ENCODE measurements at regions of chr2 and their contacts with region 1.

Region 1: DNA sequence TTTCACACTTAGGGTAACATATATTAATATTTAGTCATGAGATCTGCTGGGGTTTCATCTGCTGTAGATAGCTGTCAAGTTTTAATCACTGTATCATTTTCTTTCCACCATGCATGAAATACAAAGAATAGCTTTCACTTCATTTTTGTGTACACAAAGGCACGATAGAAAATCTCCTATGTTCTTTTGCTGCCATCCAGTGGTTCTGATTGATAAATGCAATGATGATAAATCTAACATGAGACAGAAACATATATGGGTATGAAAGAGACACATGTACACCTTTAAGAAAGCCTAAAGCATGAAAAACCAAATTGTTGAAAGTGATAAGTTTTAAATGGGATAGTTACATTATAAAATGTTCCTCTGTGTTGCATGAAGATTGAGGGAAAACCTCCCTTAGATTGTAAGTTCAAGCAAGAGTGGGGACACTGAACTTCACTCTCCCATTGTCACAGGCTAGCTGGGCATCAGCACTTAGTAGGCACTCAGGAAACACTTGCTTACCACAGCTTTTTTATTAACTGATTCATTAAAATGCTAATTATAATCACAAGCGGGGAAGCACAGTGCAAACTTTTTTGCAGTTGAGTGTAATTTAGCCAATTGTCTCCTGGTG is 31.2 kb downstream of the C1D start:
- DNase-seq: peak; percentile 70
- ATAC-seq: peak; percentile 89
- H3K4me3 ChIP-seq: no peak overlapping the region
- H3K27ac ChIP-seq: no peak overlapping the region
- H3K4me1 ChIP-seq: no peaks in the 10 kb centered on the region; the same call in 1 of the 2 replicates
- H3K27me3 ChIP-seq: no peaks in the 10 kb centered on the region
- CTCF ChIP-seq: peak; percentile 79
- POLR2A ChIP-seq: no peak
- RAD21 ChIP-seq: peak; percentile 89

Region 2: DNA sequence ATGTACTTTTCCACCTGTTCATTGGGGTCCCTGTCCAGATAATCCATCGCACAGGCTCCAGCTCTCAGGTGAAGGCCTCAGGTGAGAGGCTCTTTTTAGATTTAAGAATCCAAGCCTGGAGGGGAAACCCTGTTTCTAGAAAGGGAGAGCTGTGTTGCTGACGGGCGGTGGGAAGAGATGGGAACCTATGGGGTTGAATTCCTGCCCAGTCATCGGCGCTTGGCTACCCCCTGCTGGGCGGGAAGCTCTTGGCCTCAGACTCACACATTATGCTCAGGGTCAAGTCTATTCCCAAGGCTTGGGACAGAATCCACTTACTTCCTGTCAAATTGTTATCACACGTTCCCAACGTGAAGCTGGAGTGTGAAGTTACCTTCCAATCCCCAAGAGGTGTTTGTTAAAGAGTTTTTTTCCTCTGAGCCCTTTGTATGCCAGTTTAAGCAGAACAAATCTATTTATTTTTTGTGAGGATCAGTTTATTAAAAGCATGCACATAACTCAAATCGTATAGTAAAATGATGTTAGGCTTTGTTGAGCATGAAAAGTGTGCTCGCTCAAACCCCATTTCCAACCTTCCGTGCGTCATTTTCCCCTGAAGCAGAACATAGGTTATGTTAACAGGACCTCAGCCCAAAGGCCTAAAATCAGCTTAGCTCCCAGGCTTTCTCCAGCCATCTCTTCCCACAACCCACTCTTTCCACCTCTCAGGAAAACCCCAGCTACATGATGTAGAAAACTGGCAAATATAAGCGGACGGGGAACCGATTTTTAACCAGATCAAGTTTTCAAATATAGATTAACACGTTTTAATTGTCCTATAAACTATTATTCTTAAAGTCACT is 816.2 kb before region 1 on chr2:
- CTCF ChIA-PET with region 1: no interaction called
- POLR2A ChIA-PET with region 1: no interaction called
- dilution Hi-C with region 1: no loop called
- in situ Hi-C with region 1: no loop called
- intact Hi-C with region 1: loop called (anchors 10 kb)
- DNase-seq: peak; percentile 92
- ATAC-seq: peak; percentile 95
- H3K4me3 ChIP-seq: no peak overlapping the region
- H3K27ac ChIP-seq: peak overlapping the region; percentile 86
- H3K4me1 ChIP-seq: peaks cover 16% of the 10 kb centered on the region
- H3K27me3 ChIP-seq: no peaks in the 10 kb centered on the region
- CTCF ChIP-seq: peak; percentile 88
- POLR2A ChIP-seq: no peak
- RAD21 ChIP-seq: peak; percentile 95

Region 3: DNA sequence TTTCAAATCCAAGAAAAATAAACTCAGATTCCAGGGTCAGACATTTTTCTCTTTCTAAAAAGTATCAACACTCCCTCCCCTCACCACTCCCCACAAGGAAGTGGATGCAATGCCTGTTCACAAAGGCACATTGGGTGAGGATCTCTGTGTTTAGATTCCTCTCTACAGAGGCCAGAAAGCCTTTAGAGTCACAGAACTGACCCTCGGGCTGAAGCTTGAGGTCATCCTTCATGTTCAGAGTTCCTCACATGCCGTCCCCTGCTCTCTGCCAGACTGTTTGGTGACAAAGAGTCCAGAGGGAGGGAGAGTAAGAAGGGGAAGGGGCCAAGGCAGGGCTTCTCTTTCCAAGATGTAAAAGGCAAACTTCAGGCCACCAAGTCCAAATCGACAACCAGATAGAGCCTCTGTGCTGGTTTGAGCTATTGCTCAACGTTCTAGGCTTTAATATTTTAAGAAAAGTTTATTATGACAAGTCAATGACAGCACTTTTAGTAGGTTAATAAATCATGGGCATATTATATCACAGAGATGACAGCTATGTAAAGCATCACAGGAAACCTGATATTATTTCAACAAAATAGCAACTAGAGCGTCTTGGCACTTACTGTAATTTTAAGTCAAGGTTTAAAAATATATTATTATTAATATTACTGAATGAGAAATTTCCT is 365.1 kb before region 1 on chr2:
- CTCF ChIA-PET with region 1: no interaction called
- POLR2A ChIA-PET with region 1: no interaction called
- dilution Hi-C with region 1: no loop called
- in situ Hi-C with region 1: no loop called
- intact Hi-C with region 1: loop called (anchors 5 kb)
- DNase-seq: peak; percentile 15
- ATAC-seq: peak; percentile 66
- H3K4me3 ChIP-seq: no peak overlapping the region
- H3K27ac ChIP-seq: peak overlapping the region; percentile 65; the same call in 1 of the 2 replicates
- H3K4me1 ChIP-seq: peaks cover 7% of the 10 kb centered on the region
- H3K27me3 ChIP-seq: no peaks in the 10 kb centered on the region
- CTCF ChIP-seq: no peak
- POLR2A ChIP-seq: no peak
- RAD21 ChIP-seq: no peak

Region 4: DNA sequence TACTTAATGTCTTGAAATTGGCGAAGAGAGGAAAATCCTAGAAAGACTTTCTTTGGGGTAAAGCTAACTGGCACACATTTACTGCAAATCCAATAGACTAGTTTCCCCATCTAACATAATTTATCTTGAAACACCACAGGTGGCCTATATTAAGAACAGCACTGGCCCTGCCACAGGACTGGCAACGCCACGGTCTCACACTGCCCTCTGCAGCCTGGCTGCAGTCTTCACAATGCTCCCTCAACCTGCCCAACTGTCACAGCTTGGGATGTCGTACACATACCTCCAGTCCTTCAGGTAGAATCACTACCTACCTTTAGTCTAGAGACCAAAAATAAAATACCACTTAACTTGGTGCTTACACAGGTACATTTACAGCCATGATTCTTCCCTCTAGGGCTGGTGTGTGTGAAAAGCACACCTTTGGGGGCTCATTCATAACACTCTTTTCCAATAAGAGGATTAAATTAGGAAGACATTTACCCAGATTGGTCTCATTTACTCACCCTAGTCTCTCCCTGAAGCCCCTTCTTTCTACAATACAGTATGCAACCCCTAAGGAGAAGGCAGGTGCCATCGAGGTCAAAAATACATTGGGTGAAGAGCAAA is 191.1 kb before region 1 on chr2:
- CTCF ChIA-PET with region 1: interaction called, 9 read pairs
- POLR2A ChIA-PET with region 1: no interaction called
- dilution Hi-C with region 1: no loop called
- in situ Hi-C with region 1: loop called (anchors 10 kb)
- intact Hi-C with region 1: no loop called
- DNase-seq: peak; percentile 82
- ATAC-seq: peak; percentile 92
- H3K4me3 ChIP-seq: no peak overlapping the region
- H3K27ac ChIP-seq: no peak overlapping the region
- H3K4me1 ChIP-seq: peaks cover 4% of the 10 kb centered on the region; the same call in 1 of the 2 replicates
- H3K27me3 ChIP-seq: no peaks in the 10 kb centered on the region
- CTCF ChIP-seq: peak; percentile 95
- POLR2A ChIP-seq: 0 out of 2 replicates have a peak, but pooled peaks have one; percentile 36
- RAD21 ChIP-seq: peak; percentile 98

Region 5: GRCh38 chr2:68172990-68173700 is 141.5 kb after region 1 on chr2:
- CTCF ChIA-PET with region 1: no interaction called
- POLR2A ChIA-PET with region 1: no interaction called
- dilution Hi-C with region 1: no loop called
- in situ Hi-C with region 1: no loop called
- intact Hi-C with region 1: no loop called
- DNase-seq: no peak
- ATAC-seq: no peak
- H3K4me3 ChIP-seq: no peak overlapping the region
- H3K27ac ChIP-seq: no peak overlapping the region
- H3K4me1 ChIP-seq: no peaks in the 10 kb centered on the region
- H3K27me3 ChIP-seq: no peaks in the 10 kb centered on the region
- CTCF ChIP-seq: no peak
- POLR2A ChIP-seq: no peak
- RAD21 ChIP-seq: no peak

Measured in IMR-90 (cell line).